ENCODE measurements at regions of chr18 and their contacts with region 1.

Region 1: DNA sequence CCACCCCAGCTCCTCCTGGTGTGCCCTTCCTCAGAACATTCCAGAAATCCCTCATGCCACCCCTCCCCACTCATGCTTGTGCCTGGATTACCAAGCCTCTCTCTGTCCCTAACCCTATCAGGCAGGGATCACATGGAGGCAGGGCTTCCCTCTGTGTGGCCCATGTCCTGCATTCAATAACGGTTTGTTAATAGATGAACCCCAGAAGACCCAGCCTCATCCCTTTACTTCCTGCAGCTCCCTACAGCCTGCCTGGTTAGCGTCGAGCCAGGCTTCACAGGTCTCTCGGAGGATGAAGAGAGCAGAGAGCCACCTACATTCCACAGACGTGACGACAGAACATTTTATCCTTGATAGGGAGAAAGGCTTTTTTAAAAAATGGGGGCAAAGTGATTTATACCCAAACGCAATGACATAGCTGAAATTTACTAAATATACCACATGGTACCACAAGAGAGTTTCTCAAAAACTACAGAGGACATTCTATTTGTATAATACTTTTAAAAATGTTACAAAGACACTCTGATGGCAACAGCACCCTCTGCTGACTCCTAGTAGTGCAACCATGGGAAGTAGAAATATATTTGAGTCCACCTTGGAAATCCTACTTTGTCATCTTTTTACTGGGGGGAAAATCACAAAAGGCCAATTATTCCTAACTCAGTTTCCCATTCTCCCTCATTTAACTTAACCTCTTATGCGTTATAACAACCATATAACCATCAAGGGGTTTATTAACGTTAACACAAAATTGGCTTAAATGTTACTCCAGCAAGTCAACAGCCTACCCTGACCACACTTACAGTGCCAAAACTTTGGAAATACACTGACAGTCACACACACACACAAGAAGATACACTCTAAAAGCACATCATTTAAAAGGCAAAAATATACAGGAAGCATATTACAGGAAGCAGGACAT is 30.7 kb downstream of the FBXO15 start:
- DNase-seq: peak in 4 of 9 experiments; percentile 14 to 48 (median 24)
- ATAC-seq: no peak
- H3K4me3 ChIP-seq: no peak overlapping the region
- H3K4me3 Mint-ChIP-seq: no peak overlapping the region
- H3K27ac ChIP-seq: no peak overlapping the region
- H3K27ac Mint-ChIP-seq: no peak overlapping the region
- H3K4me1 ChIP-seq: no peaks in the 10 kb centered on the region
- H3K4me1 Mint-ChIP-seq: peaks cover 8% of the 10 kb centered on the region
- H3K27me3 ChIP-seq: no peaks in the 10 kb centered on the region
- H3K27me3 Mint-ChIP-seq: no peaks in the 10 kb centered on the region
- CTCF ChIP-seq: peak; percentile 42

Region 2: DNA sequence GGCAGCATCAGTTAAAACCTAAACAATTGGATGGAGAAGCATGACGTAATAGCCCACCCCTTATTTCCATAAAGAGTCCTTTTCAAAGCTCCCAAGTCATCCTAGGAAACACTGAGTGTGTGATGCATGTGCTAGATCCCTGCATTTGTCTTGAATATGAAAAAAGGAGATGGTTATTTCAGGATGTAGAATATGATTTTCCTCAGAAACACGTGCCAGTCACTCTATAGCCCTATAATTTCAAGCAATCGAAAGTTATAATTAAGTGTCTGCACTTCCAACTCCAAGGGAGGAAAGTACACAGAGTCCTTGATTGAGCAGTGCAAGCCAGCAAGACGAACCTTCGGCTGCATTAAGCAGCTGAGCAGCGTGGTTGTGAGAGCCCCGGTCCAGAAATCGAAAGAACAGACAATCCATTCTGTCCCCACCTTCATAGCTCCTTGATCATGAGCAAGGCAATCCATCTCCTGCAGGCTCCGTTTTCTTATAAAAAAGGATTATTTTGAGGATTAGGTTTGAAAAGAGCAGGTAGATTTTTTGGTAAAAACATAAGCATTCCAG is 257.0 kb before region 1 on chr18:
- CTCF ChIA-PET with region 1: no interaction called
- POLR2A ChIA-PET with region 1: no interaction called
- intact Hi-C with region 1: no loop called
- DNase-seq: no peak
- ATAC-seq: no peak
- H3K4me3 ChIP-seq: no peak overlapping the region
- H3K4me3 Mint-ChIP-seq: no peak overlapping the region
- H3K27ac ChIP-seq: no peak overlapping the region
- H3K27ac Mint-ChIP-seq: no peak overlapping the region
- H3K4me1 ChIP-seq: no peaks in the 10 kb centered on the region
- H3K4me1 Mint-ChIP-seq: peaks cover 2% of the 10 kb centered on the region
- H3K27me3 ChIP-seq: no peaks in the 10 kb centered on the region
- H3K27me3 Mint-ChIP-seq: no peaks in the 10 kb centered on the region
- CTCF ChIP-seq: no peak

Region 3: GRCh38 chr18:74040459-74041332 is 76.2 kb before region 1 on chr18:
- CTCF ChIA-PET with region 1: interaction called, 8 read pairs
- POLR2A ChIA-PET with region 1: no interaction called
- intact Hi-C with region 1: loop called (anchors 1 kb)
- DNase-seq: peak; percentile 22 to 70 (median 62)
- ATAC-seq: peak; percentile 86
- H3K4me3 ChIP-seq: no peak overlapping the region
- H3K4me3 Mint-ChIP-seq: no peak overlapping the region
- H3K27ac ChIP-seq: no peak overlapping the region
- H3K27ac Mint-ChIP-seq: no peak overlapping the region
- H3K4me1 ChIP-seq: no peaks in the 10 kb centered on the region
- H3K4me1 Mint-ChIP-seq: no peaks in the 10 kb centered on the region
- H3K27me3 ChIP-seq: peaks cover 0 to 2% of the 10 kb centered on the region in 2 experiments
- H3K27me3 Mint-ChIP-seq: no peaks in the 10 kb centered on the region
- CTCF ChIP-seq: peak; percentile 67

Measured in CD8-positive, alpha-beta T cell (primary cell).